ENCODE measurements at regions of chr6 and their contacts with region 1.

Region 1: GRCh38 chr6:35096129-35096862 is 44.8 kb downstream of the TCP11 start:
- DNase-seq: no peak

Region 2: GRCh38 chr6:35024551-35025054 is 71.7 kb before region 1 on chr6:
- intact Hi-C with region 1: loop called (anchors 5 kb)
- DNase-seq: no peak

Region 3: GRCh38 chr6:35064757-35065440 is 31.4 kb before region 1 on chr6:
- intact Hi-C with region 1: loop called (anchors 5 kb)
- DNase-seq: no peak